Heart right ventricle (tissue), 16 donors: ENCODE measurements at regions of chr2 and their contacts with region 1.

Region 1: DNA sequence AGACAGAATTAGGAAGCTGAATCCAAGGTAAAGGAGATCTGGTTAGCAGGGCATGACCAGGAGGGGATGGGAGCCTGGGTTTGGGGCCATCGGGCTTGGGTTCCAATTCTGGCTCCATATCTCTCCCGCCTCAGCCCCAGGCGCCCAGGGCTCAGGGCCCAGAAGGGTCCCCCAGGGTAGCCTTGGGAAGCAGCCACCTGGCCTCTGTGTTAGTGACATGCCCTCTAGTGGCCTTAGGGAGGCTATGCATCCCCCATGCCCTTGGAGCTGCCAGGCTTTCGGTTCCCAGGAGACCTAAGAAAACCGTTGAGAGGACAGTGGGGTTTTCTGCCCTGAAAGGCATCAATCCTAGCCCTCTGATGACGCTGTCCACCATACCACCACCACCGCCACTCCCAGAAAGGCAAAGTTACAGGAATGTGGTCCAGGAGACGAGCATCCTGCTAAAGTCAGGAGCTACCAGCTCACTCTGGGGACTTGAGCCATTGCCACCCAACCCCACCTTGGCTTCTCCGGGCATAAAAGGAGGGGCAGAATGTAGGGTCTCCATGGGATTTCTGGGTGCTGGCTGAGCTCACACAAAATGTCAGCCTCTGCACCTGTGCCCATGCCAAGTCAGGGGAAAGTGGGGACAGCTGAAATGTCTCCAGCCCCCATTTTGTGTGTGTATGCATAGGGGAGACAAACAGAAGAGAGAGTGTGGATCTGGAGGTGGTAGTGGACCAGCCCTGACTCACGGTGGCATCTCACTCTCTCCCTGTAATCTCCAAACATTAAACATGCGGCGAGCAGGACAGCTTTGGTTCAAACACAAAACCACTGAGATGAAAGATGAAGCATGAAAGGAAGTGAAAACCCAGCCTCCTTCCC is 56.5 kb downstream of the EMX1 start:
- DNase-seq: peak in 1 of 2 donors; percentile 30
- ATAC-seq: peak; percentile 65 to 89 (median 78)
- H3K4me3 ChIP-seq: no peak overlapping the region
- H3K27ac ChIP-seq: no peak overlapping the region
- H3K4me1 ChIP-seq: peaks cover 0 to 7% (median 0%) of the 10 kb centered on the region in 9 donors
- H3K27me3 ChIP-seq: no peaks in the 10 kb centered on the region
- CTCF ChIP-seq: peak; percentile 38 to 84 (median 73)

Region 2: GRCh38 chr2:72895759-72896281 is 78.0 kb before region 1 on chr2:
- intact Hi-C with region 1: loop called (anchors 2 to 10 kb)
- DNase-seq: peak; percentile 38 to 67
- ATAC-seq: peak; percentile 19 to 61 (median 32)
- H3K4me3 ChIP-seq: peak overlapping the region in 1 of 10 donors; percentile 16
- H3K27ac ChIP-seq: no peak overlapping the region
- H3K4me1 ChIP-seq: peaks cover 2 to 22% (median 12%) of the 10 kb centered on the region in 9 donors
- H3K27me3 ChIP-seq: peaks cover 0 to 53% (median 32%) of the 10 kb centered on the region in 7 donors
- CTCF ChIP-seq: no peak

Region 3: DNA sequence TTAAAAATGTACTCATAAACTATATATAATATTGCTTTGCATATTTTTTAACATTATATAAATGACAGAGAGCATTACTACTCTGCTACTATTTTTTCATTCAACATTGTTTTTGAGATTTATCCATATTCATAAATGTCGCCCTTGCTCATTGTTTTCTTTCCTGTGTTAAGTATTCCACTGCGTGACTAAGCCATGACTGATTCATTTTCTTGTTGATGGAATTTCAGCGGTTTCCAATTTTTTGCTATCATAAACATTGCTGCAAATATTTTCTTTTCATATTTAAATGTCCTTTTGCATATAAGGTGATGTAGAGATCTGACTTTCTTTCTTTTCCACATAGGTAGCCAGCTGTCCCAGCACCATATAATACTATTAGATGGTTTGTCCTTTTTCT is 40.1 kb after region 1 on chr2:
- intact Hi-C with region 1: loop called in 1 of 10 experiments (anchors 2 kb)
- DNase-seq: no peak
- ATAC-seq: no peak
- H3K4me3 ChIP-seq: no peak overlapping the region
- H3K27ac ChIP-seq: no peak overlapping the region
- H3K4me1 ChIP-seq: peaks cover 0 to 4% (median 0%) of the 10 kb centered on the region in 9 donors
- H3K27me3 ChIP-seq: no peaks in the 10 kb centered on the region
- CTCF ChIP-seq: no peak